AG04449 (cell line): ENCODE measurements at regions of chrX and their contacts with region 1.

Region 1: GRCh38 chrX:130079824-130080406 is 30.4 kb downstream of the ELF4 start:
- DNase-seq: peak; percentile 9
- H3K4me3 ChIP-seq: no peak overlapping the region
- CTCF ChIP-seq: peak; percentile 54

Region 2: DNA sequence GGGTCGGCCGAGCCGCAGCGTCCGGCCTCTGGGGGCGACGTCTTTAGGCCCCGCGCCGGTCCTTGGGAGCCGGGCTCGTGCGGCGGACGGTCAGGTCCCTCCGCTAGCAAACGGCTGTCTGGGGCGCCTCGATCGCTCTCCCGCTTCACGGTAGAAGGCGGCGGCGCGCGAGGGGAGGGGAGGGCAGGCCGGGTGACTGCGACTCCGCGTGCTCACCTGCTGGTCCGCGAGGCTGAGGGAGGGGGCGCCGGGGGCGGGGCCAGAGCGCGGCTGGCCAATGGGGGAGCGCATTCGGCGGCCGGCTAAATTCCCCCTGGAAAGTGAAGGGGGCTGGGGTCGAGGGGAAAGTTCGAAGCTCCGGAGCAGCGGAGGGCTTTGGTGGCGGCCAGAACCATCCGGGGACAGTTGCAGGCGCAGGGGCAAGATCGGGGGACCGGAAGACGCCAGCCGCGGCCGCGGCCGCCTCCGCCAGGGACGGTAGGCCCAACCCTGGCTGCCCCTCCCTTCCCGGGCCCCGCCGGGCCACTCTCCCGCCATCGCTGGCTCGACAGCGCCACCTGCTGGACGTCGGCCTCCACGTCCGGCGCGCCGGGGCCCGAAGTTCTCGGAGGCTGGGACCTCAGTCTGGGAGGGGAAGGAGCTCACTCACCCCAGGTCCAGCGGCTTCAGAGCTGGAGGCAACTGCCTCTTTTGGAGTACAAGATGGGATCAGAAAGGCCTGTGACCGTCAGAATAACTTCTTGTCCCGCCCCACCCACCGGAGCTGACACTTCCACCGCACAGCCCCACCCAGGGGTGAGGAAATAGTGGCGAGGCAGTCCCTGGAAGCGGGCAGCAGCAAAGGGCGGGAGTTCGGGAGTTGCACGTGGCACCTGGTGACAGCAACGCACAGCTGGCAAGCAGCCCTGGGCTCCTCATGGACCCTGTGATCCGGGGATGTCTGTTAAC is 19.5 kb before region 1 on chrX:
- CTCF ChIA-PET with region 1: interaction called, 11 read pairs
- POLR2A ChIA-PET with region 1: no interaction called
- DNase-seq: no peak
- H3K4me3 ChIP-seq: peak overlapping the region; percentile 59
- CTCF ChIP-seq: peak; percentile 84

Region 3: DNA sequence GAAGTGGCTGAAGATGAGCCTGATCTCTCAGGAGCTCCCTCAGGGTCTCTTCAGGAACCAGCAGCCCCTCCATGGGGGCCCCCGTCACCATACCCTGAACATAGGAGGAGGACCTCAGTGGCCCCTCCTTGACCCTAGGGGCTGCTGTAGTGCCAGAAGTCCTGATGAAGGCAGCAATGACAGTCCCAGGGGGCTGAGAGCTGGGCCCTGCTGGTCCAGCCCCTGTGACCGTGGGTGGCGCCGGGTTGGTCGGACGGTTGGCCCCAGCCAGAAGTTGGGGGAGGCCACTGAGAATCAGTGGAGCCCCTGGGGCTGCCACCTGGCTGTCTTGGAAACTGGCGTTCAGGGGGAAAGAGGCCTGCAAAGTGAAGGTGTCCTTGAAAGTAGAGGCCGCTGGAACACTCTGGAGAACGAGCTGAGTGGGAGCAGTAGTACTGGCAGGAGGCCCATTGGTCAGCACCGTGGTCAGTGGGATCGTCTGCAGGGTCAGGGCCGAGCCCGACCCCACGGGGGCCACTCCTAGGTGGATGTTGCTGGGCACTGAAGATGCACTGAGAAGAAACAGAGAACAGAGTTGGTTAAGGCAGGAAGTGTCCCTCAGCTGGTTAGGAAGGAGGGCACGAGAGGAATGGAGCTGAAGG is 12.8 kb before region 1 on chrX:
- CTCF ChIA-PET with region 1: interaction called, 25 read pairs
- POLR2A ChIA-PET with region 1: no interaction called
- DNase-seq: no peak
- H3K4me3 ChIP-seq: no peak overlapping the region
- CTCF ChIP-seq: no peak

Region 4: GRCh38 chrX:130120746-130121504 is 41.0 kb after region 1 on chrX:
- CTCF ChIA-PET with region 1: interaction called, 37 read pairs
- POLR2A ChIA-PET with region 1: no interaction called
- DNase-seq: no peak
- H3K4me3 ChIP-seq: peak overlapping the region; percentile 41
- CTCF ChIP-seq: peak; percentile 68

Region 5: DNA sequence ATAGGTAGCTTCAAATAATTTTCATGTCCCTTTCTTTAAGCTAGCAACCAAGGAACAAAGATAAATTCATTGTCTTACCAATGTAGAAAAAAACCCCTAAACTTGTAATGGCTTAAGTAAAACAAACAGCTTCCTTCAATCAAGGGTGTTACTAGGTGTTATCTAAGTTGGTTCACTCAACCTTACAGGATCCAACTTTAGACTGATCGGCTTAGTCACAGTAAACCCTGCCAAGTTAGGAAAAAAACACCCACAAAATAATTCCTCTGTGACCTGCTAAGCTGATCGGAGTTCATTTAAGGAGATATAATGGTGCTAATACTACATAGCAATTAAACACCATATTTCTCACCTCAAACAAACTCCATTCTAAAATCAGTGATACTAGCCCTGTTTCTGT is 75.6 kb after region 1 on chrX:
- CTCF ChIA-PET with region 1: no interaction called
- POLR2A ChIA-PET with region 1: no interaction called
- DNase-seq: no peak
- H3K4me3 ChIP-seq: no peak overlapping the region
- CTCF ChIP-seq: no peak

Region 6: GRCh38 chrX:130196466-130196865 is 116.6 kb after region 1 on chrX:
- CTCF ChIA-PET with region 1: interaction called, 143 read pairs
- POLR2A ChIA-PET with region 1: no interaction called
- DNase-seq: no peak
- H3K4me3 ChIP-seq: no peak overlapping the region
- CTCF ChIP-seq: no peak